IMR-90 (cell line): ENCODE measurements at regions of chr2 and their contacts with region 1.

Region 1: GRCh38 chr2:188524519-188525113 is 232.9 kb downstream of the GULP1 start:
- DNase-seq: peak; percentile 69
- ATAC-seq: peak; percentile 69; the same call in 1 of the 2 replicates
- H3K4me3 ChIP-seq: no peak overlapping the region
- H3K27ac ChIP-seq: no peak overlapping the region
- H3K4me1 ChIP-seq: peaks cover 2% of the 10 kb centered on the region; the same call in 1 of the 2 replicates
- H3K27me3 ChIP-seq: no peaks in the 10 kb centered on the region
- CTCF ChIP-seq: peak; percentile 85
- POLR2A ChIP-seq: no peak
- RAD21 ChIP-seq: peak; percentile 80

Region 2: GRCh38 chr2:188569431-188570165 is 45.0 kb after region 1 on chr2:
- CTCF ChIA-PET with region 1: no interaction called
- POLR2A ChIA-PET with region 1: no interaction called
- dilution Hi-C with region 1: no loop called
- in situ Hi-C with region 1: no loop called
- intact Hi-C with region 1: no loop called
- DNase-seq: no peak
- ATAC-seq: no peak
- H3K4me3 ChIP-seq: no peak overlapping the region
- H3K27ac ChIP-seq: no peak overlapping the region
- H3K4me1 ChIP-seq: no peaks in the 10 kb centered on the region
- H3K27me3 ChIP-seq: no peaks in the 10 kb centered on the region
- CTCF ChIP-seq: no peak
- POLR2A ChIP-seq: no peak
- RAD21 ChIP-seq: no peak

Region 3: DNA sequence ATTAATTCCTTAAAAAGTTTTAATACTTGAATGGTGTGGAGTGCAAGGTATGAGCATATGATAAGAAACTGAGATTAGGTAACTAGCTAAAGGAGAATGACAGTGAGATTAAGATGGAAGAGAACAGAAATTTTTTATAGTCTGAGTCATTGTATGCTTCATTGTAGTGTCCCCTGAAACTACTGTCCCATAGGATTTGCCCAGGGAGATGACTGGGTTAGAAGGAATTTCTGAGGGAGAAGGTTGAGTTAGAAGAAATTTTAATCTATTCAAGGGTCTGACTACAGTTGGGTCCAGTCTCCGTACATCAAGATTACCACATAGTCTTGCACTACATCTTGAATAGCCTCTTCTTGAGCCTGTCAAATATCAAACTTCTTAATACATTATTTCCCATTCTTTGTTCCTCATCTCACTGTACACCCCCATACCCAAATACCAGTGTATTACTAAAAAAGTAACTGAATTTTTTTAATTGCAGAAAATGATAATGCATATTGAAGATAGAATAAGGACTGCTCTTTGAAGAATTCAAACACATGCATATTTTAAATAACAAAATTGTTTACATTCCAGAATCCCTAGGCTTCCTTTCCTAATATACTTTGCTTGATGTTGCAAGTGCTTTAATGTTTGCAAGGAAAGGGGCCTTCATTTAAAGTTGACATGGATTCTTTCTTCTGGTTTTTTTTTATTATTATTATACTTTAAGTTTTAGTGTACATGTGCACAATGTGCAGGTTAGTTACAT is 135.2 kb after region 1 on chr2:
- CTCF ChIA-PET with region 1: interaction called, 3 read pairs
- POLR2A ChIA-PET with region 1: no interaction called
- dilution Hi-C with region 1: no loop called
- in situ Hi-C with region 1: no loop called
- intact Hi-C with region 1: loop called (anchors 5 kb)
- DNase-seq: peak; percentile 74
- ATAC-seq: peak; percentile 90
- H3K4me3 ChIP-seq: no peak overlapping the region
- H3K27ac ChIP-seq: peak overlapping the region; percentile 19; the same call in 1 of the 2 replicates
- H3K4me1 ChIP-seq: no peaks in the 10 kb centered on the region
- H3K27me3 ChIP-seq: no peaks in the 10 kb centered on the region
- CTCF ChIP-seq: no peak
- POLR2A ChIP-seq: no peak
- RAD21 ChIP-seq: no peak

Region 4: DNA sequence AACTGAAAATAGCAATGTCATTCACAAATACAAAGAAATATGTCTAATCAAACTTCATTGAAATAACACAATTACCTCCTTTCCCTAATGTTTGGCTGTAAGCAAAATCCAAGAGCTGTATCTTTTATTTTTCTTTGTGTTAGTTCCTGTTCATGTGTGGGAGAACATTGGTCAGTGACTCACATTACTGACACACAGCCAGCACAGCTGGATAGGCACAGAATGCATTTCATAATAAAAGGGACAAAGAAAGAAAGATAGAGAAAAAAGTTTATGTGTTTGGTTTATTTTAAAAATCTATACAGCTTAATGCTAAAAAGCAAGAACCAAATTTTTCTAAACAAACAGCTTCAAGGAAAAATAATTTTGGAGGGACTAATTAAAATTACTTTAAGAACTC is 264.0 kb after region 1 on chr2:
- CTCF ChIA-PET with region 1: no interaction called
- POLR2A ChIA-PET with region 1: no interaction called
- dilution Hi-C with region 1: no loop called
- in situ Hi-C with region 1: no loop called
- intact Hi-C with region 1: loop called (anchors 2 kb)
- DNase-seq: peak; percentile 93
- ATAC-seq: peak; percentile 52
- H3K4me3 ChIP-seq: no peak overlapping the region
- H3K27ac ChIP-seq: peak overlapping the region; percentile 37; the same call in 1 of the 2 replicates
- H3K4me1 ChIP-seq: peaks cover 9% of the 10 kb centered on the region
- H3K27me3 ChIP-seq: no peaks in the 10 kb centered on the region
- CTCF ChIP-seq: no peak
- POLR2A ChIP-seq: no peak
- RAD21 ChIP-seq: no peak

Region 5: GRCh38 chr2:188819781-188820180 is 295.2 kb after region 1 on chr2:
- CTCF ChIA-PET with region 1: no interaction called
- POLR2A ChIA-PET with region 1: no interaction called
- dilution Hi-C with region 1: no loop called
- in situ Hi-C with region 1: no loop called
- intact Hi-C with region 1: no loop called
- DNase-seq: no peak
- ATAC-seq: no peak
- H3K4me3 ChIP-seq: no peak overlapping the region
- H3K27ac ChIP-seq: no peak overlapping the region
- H3K4me1 ChIP-seq: no peaks in the 10 kb centered on the region
- H3K27me3 ChIP-seq: no peaks in the 10 kb centered on the region
- CTCF ChIP-seq: no peak
- POLR2A ChIP-seq: no peak
- RAD21 ChIP-seq: no peak

Region 6: GRCh38 chr2:188983427-188984064 is 458.9 kb after region 1 on chr2:
- CTCF ChIA-PET with region 1: interaction called, 5 read pairs
- POLR2A ChIA-PET with region 1: no interaction called
- dilution Hi-C with region 1: no loop called
- in situ Hi-C with region 1: loop called (anchors 5 kb)
- intact Hi-C with region 1: loop called (anchors 1 kb)
- DNase-seq: peak; percentile 78
- ATAC-seq: no peak
- H3K4me3 ChIP-seq: no peak overlapping the region
- H3K27ac ChIP-seq: peak overlapping the region; percentile 25; the same call in 1 of the 2 replicates
- H3K4me1 ChIP-seq: peaks cover 4% of the 10 kb centered on the region
- H3K27me3 ChIP-seq: no peaks in the 10 kb centered on the region
- CTCF ChIP-seq: peak; percentile 34
- POLR2A ChIP-seq: no peak
- RAD21 ChIP-seq: no peak

Region 7: GRCh38 chr2:189347540-189347939 is 822.9 kb after region 1 on chr2:
- CTCF ChIA-PET with region 1: no interaction called
- POLR2A ChIA-PET with region 1: no interaction called
- dilution Hi-C with region 1: no loop called
- in situ Hi-C with region 1: no loop called
- intact Hi-C with region 1: loop called (anchors 1 kb)
- DNase-seq: peak; percentile 96
- ATAC-seq: peak; percentile 90
- H3K4me3 ChIP-seq: no peak overlapping the region
- H3K27ac ChIP-seq: peak overlapping the region; percentile 89; the same call in 1 of the 2 replicates
- H3K4me1 ChIP-seq: peaks cover 8% of the 10 kb centered on the region
- H3K27me3 ChIP-seq: no peaks in the 10 kb centered on the region
- CTCF ChIP-seq: peak; percentile 65
- POLR2A ChIP-seq: no peak
- RAD21 ChIP-seq: peak; percentile 89